ENCODE measurements at regions of chr17 and their contacts with region 1.

Region 1: DNA sequence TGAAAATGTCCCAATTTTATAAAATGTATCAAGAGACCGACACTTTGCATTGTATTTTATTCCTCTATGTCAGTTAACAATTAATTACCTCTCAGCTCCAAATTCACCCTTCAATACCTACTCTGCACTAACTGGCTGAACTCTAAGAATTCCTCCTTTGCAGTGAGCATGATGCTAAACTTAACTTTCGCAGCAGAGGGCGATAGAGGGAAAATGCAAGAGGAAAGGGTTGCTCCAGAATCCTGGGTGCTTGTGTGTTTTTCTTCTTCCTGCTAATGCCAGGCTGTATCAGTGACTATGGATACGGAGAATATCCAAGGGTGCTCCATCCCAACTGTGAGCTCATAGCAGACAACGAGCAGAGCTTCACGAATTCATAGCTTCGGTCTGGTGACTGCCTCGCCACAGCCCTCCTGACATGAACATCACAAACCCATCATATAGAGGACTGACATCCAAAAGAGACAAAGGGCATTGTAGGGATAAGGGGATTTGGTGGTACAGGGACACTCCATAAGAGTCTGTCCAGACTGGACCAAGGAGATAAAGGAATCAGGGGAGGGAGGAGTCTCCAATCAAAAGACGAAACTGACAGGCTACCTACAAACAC is 172.9 kb downstream of the STX8 start:
- DNase-seq: peak; percentile 49
- CTCF ChIP-seq: peak; percentile 62

Region 2: DNA sequence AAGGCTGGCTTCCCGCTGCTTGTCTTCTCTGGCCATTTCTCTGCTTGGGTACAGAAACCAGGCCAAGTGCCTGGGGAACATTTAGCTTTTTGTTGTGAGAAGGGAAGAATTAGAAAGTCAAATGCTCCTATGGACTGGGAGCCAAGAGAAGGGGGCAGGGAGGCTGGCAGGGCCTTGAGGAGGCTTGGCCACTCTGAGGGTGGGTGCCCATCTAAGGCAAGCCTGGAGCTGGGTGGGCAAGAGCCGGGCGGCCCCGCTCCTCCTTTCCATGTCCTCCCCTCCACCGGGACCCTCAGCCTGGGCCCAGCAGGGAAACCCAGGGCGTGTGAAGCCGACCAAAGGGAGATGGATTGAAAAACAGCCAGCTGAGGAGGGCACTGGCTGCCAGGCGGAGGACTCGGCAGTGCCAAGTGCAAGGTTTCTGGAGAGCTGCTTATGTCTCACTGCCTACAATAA is 312.0 kb before region 1 on chr17:
- in situ Hi-C with region 1: no loop called
- DNase-seq: no peak
- CTCF ChIP-seq: no peak

Region 3: GRCh38 chr17:9512323-9513168 is 109.9 kb after region 1 on chr17:
- in situ Hi-C with region 1: loop called (anchors 10 kb)
- DNase-seq: no peak
- CTCF ChIP-seq: no peak

Measured in GM13977 (cell line).